ENCODE measurements at regions of chr2 and their contacts with region 1.

Region 1: DNA sequence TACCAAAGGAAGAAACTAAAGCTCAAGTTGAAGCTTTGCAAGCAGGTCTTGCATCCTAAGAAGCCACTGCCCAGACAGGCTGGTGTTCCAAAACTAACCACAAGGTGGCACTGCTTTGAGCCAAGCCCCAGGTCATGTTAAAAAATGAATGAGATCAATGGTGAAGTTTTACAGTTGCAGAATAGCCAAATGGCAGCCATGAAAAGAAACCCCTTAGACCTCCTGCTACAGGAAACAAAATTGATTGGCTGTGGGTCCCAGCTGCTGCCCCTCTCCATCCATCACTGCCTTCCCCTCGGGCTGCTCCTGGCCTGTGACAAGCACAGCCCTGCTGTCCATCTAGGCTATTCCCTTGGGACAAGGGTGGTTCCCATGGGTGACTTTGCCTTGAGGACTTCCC is 20.7 kb upstream of the MREG start:
- DNase-seq: peak; percentile 67
- ATAC-seq: peak; percentile 65
- H3K4me3 ChIP-seq: no peak overlapping the region
- H3K27ac ChIP-seq: peak overlapping the region; percentile 83
- H3K4me1 ChIP-seq: peaks cover 32% of the 10 kb centered on the region
- H3K27me3 ChIP-seq: no peaks in the 10 kb centered on the region
- CTCF ChIP-seq: peak; percentile 77 to 94 (median 84)
- EP300 ChIP-seq: no peak
- POLR2A ChIP-seq: no peak
- RAD21 ChIP-seq: peak; percentile 75

Region 2: DNA sequence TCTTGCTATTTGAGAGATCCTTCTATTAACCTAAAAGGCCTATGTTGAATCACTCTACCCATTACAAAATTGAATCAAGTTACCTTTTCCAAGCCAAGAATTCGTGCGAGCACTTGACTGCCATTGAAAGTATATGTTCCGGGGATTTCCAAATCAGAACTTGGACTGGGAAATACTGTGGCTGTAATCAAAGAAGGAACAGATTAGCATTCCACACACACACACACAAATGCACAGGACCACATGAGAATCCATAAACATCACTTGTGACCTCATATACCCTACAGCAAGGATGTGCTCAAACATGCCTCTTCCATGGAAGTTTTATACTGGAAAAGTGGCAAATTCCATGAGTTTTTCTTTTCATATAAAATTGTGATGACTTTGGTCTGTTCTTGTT is 981.7 kb before region 1 on chr2:
- CTCF ChIA-PET with region 1: no interaction called
- POLR2A ChIA-PET with region 1: no interaction called
- RAD21 ChIA-PET with region 1: no interaction called
- SMC1A ChIA-PET with region 1: no interaction called
- in situ Hi-C with region 1: no loop called
- intact Hi-C with region 1: no loop called
- DNase-seq: no peak
- ATAC-seq: no peak
- H3K4me3 ChIP-seq: no peak overlapping the region
- H3K27ac ChIP-seq: no peak overlapping the region
- H3K4me1 ChIP-seq: no peaks in the 10 kb centered on the region
- H3K27me3 ChIP-seq: no peaks in the 10 kb centered on the region
- CTCF ChIP-seq: no peak
- EP300 ChIP-seq: no peak
- POLR2A ChIP-seq: no peak
- RAD21 ChIP-seq: no peak

Region 3: DNA sequence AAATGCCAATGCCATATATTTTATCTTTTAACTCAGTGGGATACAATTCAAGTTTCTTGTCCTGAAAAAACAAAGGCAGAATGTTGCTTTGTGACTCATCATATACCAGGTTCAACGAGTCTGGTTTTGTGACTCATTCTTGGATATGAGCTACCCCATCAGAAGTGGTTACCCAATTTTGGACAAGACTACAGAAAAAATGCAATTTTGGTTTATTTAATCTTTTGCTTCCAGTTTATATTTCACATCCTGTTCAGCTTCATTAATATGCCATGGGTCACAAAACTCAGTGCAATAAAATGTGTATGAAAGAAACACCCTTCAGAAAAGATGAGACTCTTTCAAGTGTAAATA is 623.2 kb before region 1 on chr2:
- CTCF ChIA-PET with region 1: no interaction called
- POLR2A ChIA-PET with region 1: no interaction called
- RAD21 ChIA-PET with region 1: no interaction called
- SMC1A ChIA-PET with region 1: no interaction called
- in situ Hi-C with region 1: no loop called
- intact Hi-C with region 1: no loop called
- DNase-seq: no peak
- ATAC-seq: peak; percentile 72
- H3K4me3 ChIP-seq: no peak overlapping the region
- H3K27ac ChIP-seq: no peak overlapping the region
- H3K4me1 ChIP-seq: no peaks in the 10 kb centered on the region
- H3K27me3 ChIP-seq: no peaks in the 10 kb centered on the region
- CTCF ChIP-seq: no peak
- EP300 ChIP-seq: no peak
- POLR2A ChIP-seq: no peak
- RAD21 ChIP-seq: no peak

Region 4: GRCh38 chr2:216006164-216006663 is 27.9 kb before region 1 on chr2:
- CTCF ChIA-PET with region 1: interaction called, 27 read pairs
- POLR2A ChIA-PET with region 1: interaction called, 8 read pairs
- RAD21 ChIA-PET with region 1: interaction called, 45 read pairs
- SMC1A ChIA-PET with region 1: interaction called, 12 read pairs
- in situ Hi-C with region 1: no loop called
- intact Hi-C with region 1: no loop called
- DNase-seq: peak; percentile 73
- ATAC-seq: peak; percentile 40
- H3K4me3 ChIP-seq: peak overlapping the region; percentile 61
- H3K27ac ChIP-seq: peak overlapping the region; percentile 90
- H3K4me1 ChIP-seq: peaks cover 55% of the 10 kb centered on the region
- H3K27me3 ChIP-seq: no peaks in the 10 kb centered on the region
- CTCF ChIP-seq: no peak
- EP300 ChIP-seq: peak in 1 of 2 experiments; percentile 60; a peak in 2 of 4 replicates
- POLR2A ChIP-seq: peak; percentile 41; the same call in 1 of the 2 replicates
- RAD21 ChIP-seq: peak; percentile 3; the same call in 1 of the 2 replicates

Region 5: DNA sequence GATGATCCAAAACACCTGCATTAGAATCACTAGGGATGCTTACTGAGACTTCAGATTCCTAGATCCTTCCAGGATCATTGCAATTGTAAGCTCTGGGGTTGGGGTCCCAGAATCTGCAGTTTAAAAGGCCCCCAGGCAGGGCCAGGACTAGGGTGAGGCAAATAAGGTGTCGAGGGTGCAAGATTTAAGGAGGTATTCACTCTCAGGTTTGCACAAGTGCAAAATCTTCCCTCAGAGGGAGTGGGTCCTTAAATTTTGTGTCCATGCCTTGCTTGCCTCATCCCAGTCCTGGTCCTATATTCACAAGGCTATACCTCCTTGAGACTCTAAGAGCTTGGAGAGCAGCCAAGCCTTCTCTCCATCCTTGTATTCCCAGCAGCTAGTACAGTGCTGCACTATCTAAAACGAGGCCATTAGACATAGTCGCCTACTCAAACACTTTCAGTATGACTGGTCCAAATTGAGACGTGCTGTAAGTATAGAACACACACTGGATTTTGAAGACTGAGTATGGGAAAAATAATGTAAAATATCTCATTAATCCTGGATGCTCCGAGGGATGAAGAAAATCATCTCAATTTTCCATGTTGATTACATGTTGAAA is 10.9 kb after region 1 on chr2:
- CTCF ChIA-PET with region 1: interaction called, 58 read pairs
- POLR2A ChIA-PET with region 1: interaction called, 25 read pairs
- RAD21 ChIA-PET with region 1: interaction called, 36 read pairs
- SMC1A ChIA-PET with region 1: interaction called, 32 read pairs
- in situ Hi-C with region 1: no loop called
- intact Hi-C with region 1: no loop called
- DNase-seq: no peak
- ATAC-seq: peak; percentile 97
- H3K4me3 ChIP-seq: no peak overlapping the region
- H3K27ac ChIP-seq: peak overlapping the region; percentile 1; the same call in 1 of the 2 replicates
- H3K4me1 ChIP-seq: peaks cover 10% of the 10 kb centered on the region
- H3K27me3 ChIP-seq: no peaks in the 10 kb centered on the region
- CTCF ChIP-seq: no peak
- EP300 ChIP-seq: peak in 1 of 2 experiments; percentile 48; a peak in 1 of 4 replicates
- POLR2A ChIP-seq: no peak
- RAD21 ChIP-seq: 0 out of 2 replicates have a peak, but pooled peaks have one; percentile 6

Region 6: GRCh38 chr2:216090369-216090786 is 56.3 kb after region 1 on chr2:
- CTCF ChIA-PET with region 1: interaction called, 5 read pairs
- POLR2A ChIA-PET with region 1: interaction called, 5 read pairs
- RAD21 ChIA-PET with region 1: interaction called, 6 read pairs
- SMC1A ChIA-PET with region 1: interaction called, 11 read pairs
- in situ Hi-C with region 1: no loop called
- intact Hi-C with region 1: no loop called
- DNase-seq: no peak
- ATAC-seq: peak; percentile 70
- H3K4me3 ChIP-seq: peak overlapping the region; percentile 25; the same call in 1 of the 2 replicates
- H3K27ac ChIP-seq: peak overlapping the region; percentile 49
- H3K4me1 ChIP-seq: peaks cover 18% of the 10 kb centered on the region
- H3K27me3 ChIP-seq: no peaks in the 10 kb centered on the region
- CTCF ChIP-seq: no peak
- EP300 ChIP-seq: no peak
- POLR2A ChIP-seq: no peak
- RAD21 ChIP-seq: no peak

Region 7: GRCh38 chr2:216139884-216140283 is 105.8 kb after region 1 on chr2:
- CTCF ChIA-PET with region 1: interaction called, 30 read pairs
- POLR2A ChIA-PET with region 1: no interaction called
- RAD21 ChIA-PET with region 1: interaction called, 19 read pairs
- SMC1A ChIA-PET with region 1: interaction called, 20 read pairs
- in situ Hi-C with region 1: no loop called
- intact Hi-C with region 1: no loop called
- DNase-seq: no peak
- ATAC-seq: peak; percentile 57
- H3K4me3 ChIP-seq: no peak overlapping the region
- H3K27ac ChIP-seq: no peak overlapping the region
- H3K4me1 ChIP-seq: peaks cover 17% of the 10 kb centered on the region
- H3K27me3 ChIP-seq: no peaks in the 10 kb centered on the region
- CTCF ChIP-seq: peak; percentile 42 to 49 (median 42); a peak in 4 of 6 replicates
- EP300 ChIP-seq: no peak
- POLR2A ChIP-seq: no peak
- RAD21 ChIP-seq: peak; percentile 51

Region 8: DNA sequence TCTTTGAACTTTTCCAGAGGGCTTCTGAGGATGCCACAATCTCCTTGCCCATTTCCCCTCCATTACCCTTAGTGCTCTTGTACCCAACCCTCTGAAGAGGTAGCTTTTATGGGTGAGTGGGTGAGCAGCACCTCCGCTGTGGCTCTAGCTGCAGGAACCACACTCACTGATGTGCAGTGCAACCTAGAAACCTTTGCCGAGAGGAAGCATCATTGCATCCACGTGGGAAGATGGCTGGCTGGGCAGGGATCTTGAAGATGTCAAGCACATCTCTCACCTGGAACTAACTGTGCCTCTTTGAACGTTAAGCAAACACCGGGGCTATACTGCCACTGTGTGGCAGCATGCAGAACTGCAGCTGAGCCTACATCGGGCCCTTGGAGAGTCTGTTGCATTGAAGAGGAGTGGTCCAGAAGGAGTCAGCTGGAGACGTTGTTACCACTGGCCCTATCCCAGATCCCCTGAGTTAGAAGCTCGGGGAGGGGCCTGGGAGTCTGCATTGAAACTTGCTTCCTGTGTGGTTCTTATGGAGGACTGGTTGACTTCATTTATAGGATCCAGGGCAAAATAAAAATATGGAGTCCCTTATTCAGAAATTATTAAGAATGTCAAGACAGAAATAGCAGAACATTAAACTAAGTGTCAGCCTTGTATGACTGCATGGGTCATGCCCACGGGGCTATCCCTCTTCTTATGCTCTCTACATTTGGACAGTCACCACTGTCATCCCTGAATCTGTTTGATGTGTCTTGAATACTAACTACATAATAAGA is 632.6 kb after region 1 on chr2:
- CTCF ChIA-PET with region 1: interaction called, 3 read pairs
- POLR2A ChIA-PET with region 1: no interaction called
- RAD21 ChIA-PET with region 1: no interaction called
- SMC1A ChIA-PET with region 1: no interaction called
- in situ Hi-C with region 1: no loop called
- intact Hi-C with region 1: loop called (anchors 10 kb)
- DNase-seq: peak; percentile 19
- ATAC-seq: peak; percentile 92
- H3K4me3 ChIP-seq: no peak overlapping the region
- H3K27ac ChIP-seq: no peak overlapping the region
- H3K4me1 ChIP-seq: no peaks in the 10 kb centered on the region
- H3K27me3 ChIP-seq: peaks cover 2 to 5% of the 10 kb centered on the region in 2 experiments
- CTCF ChIP-seq: peak; percentile 98 to 100 (median 98)
- EP300 ChIP-seq: no peak
- POLR2A ChIP-seq: no peak
- RAD21 ChIP-seq: peak; percentile 97

Measured in GM12878 (cell line).